ENCODE measurements at regions of chr17 and their contacts with region 1.

Region 1: GRCh38 chr17:45702666-45703266 is 81.4 kb upstream of the CRHR1 start:
- DNase-seq: no peak
- ATAC-seq: no peak
- H3K4me3 ChIP-seq: no peak overlapping the region
- H3K27ac ChIP-seq: no peak overlapping the region
- H3K4me1 ChIP-seq: no peaks in the 10 kb centered on the region
- H3K27me3 ChIP-seq: peaks cover 0 to 30% (median 6%) of the 10 kb centered on the region in 3 donors
- CTCF ChIP-seq: no peak

Region 2: DNA sequence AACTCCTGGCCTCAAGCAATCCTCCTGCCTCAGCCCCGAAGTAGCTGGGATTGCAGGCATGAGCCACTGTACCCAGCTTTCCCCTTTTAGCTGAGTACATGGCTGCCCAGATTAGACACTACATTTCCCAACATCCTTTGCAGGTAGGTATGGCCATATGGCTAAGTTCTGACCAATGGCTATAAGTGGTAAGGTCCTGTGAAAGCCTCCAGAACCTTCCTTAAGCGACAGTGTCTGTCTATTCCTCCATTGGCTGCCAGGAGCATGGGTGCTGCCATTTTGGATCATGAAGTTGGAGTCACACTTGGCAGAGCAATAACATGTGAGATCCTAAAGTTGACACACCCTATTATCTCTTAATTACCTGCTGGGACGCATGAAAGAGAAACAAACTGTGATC is 57.0 kb after region 1 on chr17:
- intact Hi-C with region 1: loop called in 1 of 2 experiments (anchors 5 kb)
- DNase-seq: peak in 1 of 2 donors; percentile 3
- ATAC-seq: no peak
- H3K4me3 ChIP-seq: no peak overlapping the region
- H3K27ac ChIP-seq: no peak overlapping the region
- H3K4me1 ChIP-seq: no peaks in the 10 kb centered on the region
- H3K27me3 ChIP-seq: peaks cover 0 to 11% (median 10%) of the 10 kb centered on the region in 3 donors
- CTCF ChIP-seq: no peak

Region 3: GRCh38 chr17:45889579-45889978 is 186.8 kb after region 1 on chr17:
- intact Hi-C with region 1: no loop called
- DNase-seq: no peak
- ATAC-seq: no peak
- H3K4me3 ChIP-seq: no peak overlapping the region
- H3K27ac ChIP-seq: no peak overlapping the region
- H3K4me1 ChIP-seq: no peaks in the 10 kb centered on the region
- H3K27me3 ChIP-seq: no peaks in the 10 kb centered on the region
- CTCF ChIP-seq: no peak